Right lobe of liver (tissue), 6 donors: ENCODE measurements at regions of chr11 and their contacts with region 1.

Region 1: DNA sequence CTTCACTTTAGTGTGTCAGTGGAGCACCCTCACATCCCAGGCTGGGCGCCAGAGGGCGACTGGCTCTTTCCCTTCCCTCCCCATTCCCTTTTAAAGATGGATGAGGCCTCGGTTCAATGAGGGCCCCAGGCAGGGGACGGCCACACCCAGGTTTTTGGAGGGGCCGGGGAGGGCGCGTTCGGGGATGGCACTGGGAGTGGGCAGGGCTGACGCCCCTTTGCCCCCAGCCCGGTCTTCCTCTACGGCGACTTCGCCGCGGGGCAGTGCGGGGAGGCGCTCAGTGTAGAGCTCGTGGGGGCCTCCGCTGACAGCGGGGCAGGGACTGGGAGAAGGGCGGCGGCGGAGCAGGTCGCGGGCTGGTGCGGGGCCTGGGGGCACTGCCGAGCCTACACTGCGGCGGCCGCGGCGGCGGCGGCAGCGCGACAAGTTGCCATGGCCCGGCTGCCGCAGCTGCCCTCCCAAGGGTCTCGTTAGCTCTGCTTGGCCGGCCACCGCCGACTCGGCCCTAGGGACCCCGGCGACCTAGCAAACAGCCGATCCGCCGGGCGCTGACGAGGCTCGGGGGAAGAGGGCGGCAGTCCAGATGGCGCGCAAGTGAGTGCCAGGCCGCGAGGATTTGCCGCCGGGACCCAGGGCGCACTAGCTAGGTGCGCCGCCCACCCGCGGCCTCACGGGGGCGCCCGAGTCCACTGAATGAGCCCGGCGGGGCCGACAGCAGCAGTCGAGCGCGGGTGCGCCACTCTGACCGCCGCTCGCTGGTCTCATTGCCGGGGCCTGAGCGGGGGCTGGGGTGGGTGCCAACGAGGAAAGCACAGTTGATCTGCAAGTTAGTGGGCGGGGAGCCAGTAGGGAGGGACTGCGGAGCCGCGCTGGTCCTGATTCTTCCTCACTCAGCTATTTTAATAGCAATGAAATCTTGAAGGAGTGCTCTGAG is 92.7 kb downstream of the RRM1 start:
- DNase-seq: peak; percentile 93 to 95 (median 94)
- ATAC-seq: peak; percentile 82 to 92 (median 88)
- H3K4me3 ChIP-seq: peak overlapping the region; percentile 57 to 73 (median 60)
- H3K27ac ChIP-seq: peak overlapping the region; percentile 57 to 78 (median 75)
- H3K4me1 ChIP-seq: peaks cover 0 to 32% (median 9%) of the 10 kb centered on the region in 4 donors
- H3K27me3 ChIP-seq: no peaks in the 10 kb centered on the region
- CTCF ChIP-seq: peak; percentile 94 to 98 (median 97)
- POLR2A ChIP-seq: peak; percentile 46

Region 2: GRCh38 chr11:3894128-3894731 is 293.1 kb before region 1 on chr11:
- intact Hi-C with region 1: no loop called
- DNase-seq: no peak
- ATAC-seq: peak; percentile 13 to 66 (median 16)
- H3K4me3 ChIP-seq: no peak overlapping the region
- H3K27ac ChIP-seq: peak overlapping the region; percentile 54 to 84 (median 57)
- H3K4me1 ChIP-seq: peaks cover 0 to 42% (median 21%) of the 10 kb centered on the region in 4 donors
- H3K27me3 ChIP-seq: no peaks in the 10 kb centered on the region
- CTCF ChIP-seq: no peak
- POLR2A ChIP-seq: no peak

Region 3: GRCh38 chr11:4076774-4077173 is 110.5 kb before region 1 on chr11:
- intact Hi-C with region 1: no loop called
- DNase-seq: no peak
- ATAC-seq: no peak
- H3K4me3 ChIP-seq: no peak overlapping the region
- H3K27ac ChIP-seq: no peak overlapping the region
- H3K4me1 ChIP-seq: peaks cover 0 to 7% (median 0%) of the 10 kb centered on the region in 4 donors
- H3K27me3 ChIP-seq: no peaks in the 10 kb centered on the region
- CTCF ChIP-seq: no peak
- POLR2A ChIP-seq: no peak

Region 4: DNA sequence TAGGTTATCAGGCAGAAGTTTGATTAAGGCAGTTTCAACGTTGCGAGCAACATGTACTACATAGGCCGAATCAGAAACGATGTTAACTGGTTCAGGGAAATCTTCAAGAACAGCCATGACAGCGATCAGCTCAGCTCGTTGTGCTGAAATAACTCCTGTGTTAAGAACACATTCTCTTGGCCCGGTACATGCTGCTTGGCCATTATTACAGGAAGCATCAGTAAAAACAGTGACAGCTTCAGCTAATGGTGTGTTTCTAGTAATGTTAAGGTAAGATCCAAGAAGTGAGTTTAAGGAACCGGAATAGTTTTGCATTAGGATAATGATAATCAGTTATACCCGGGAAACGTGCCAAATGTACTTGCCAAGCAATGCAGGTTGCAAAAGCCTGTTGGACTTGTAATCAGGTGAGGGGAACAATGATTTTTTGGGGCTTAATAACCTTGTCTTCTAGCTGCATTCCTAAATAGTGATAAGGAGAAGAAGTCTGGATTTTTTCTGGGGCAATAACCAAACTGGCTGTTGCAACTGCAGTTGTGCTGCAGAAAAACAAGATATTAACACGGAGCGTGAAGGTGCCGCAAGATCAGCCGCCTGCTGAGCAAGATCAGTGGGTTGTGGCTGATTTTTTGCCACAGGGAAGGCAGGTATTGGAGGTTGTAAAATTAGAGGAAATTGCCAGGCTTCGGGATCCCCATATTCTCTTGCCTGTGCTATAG is 309.4 kb after region 1 on chr11:
- intact Hi-C with region 1: loop called (anchors 10 kb)
- DNase-seq: no peak
- ATAC-seq: peak in 1 of 4 donors; percentile 22
- H3K4me3 ChIP-seq: no peak overlapping the region
- H3K27ac ChIP-seq: no peak overlapping the region
- H3K4me1 ChIP-seq: no peaks in the 10 kb centered on the region
- H3K27me3 ChIP-seq: no peaks in the 10 kb centered on the region
- CTCF ChIP-seq: no peak
- POLR2A ChIP-seq: no peak

Region 5: DNA sequence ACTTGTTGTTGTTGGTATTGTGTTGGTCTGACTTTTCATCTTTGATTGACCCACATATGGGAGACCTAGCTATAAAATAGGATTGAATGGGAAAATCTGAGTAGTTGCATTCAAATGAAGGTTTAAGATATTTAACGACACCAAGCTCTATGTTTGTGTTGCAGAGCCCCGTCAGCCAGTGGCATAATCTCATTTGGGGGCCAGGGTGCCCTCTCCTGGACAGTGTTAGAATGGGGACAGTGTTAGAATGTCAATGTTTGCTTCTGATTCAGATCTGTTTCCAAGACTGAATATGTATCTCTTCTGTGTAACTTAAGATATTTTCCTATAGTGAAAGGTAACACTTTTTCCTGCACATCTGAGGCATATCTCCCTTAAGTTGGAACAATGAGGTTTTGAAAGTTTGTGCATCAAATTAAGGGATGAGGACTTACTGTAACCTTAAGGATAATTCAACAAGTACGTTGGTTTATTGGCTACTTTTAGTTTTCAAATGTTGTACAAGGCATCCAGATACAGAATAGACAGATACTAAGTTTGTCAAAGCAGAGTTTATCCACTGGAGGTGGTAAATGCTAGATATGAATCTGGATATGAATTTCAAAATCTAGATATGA is 352.4 kb after region 1 on chr11:
- intact Hi-C with region 1: loop called in 1 of 2 experiments (anchors 10 kb)
- DNase-seq: peak; percentile 57 to 60 (median 60)
- ATAC-seq: peak; percentile 91 to 94 (median 92)
- H3K4me3 ChIP-seq: no peak overlapping the region
- H3K27ac ChIP-seq: no peak overlapping the region
- H3K4me1 ChIP-seq: peaks cover 0 to 4% (median 0%) of the 10 kb centered on the region in 4 donors
- H3K27me3 ChIP-seq: no peaks in the 10 kb centered on the region
- CTCF ChIP-seq: peak; percentile 72 to 81 (median 77)
- POLR2A ChIP-seq: no peak

Region 6: GRCh38 chr11:4551346-4551979 is 364.1 kb after region 1 on chr11:
- intact Hi-C with region 1: loop called (anchors 10 kb)
- DNase-seq: no peak
- ATAC-seq: peak; percentile 36 to 57 (median 50)
- H3K4me3 ChIP-seq: no peak overlapping the region
- H3K27ac ChIP-seq: no peak overlapping the region
- H3K4me1 ChIP-seq: peaks cover 0 to 17% (median 8%) of the 10 kb centered on the region in 4 donors
- H3K27me3 ChIP-seq: no peaks in the 10 kb centered on the region
- CTCF ChIP-seq: peak; percentile 38 to 58 (median 50)
- POLR2A ChIP-seq: no peak

Region 7: GRCh38 chr11:5004424-5005274 is 817.3 kb after region 1 on chr11:
- intact Hi-C with region 1: loop called in 1 of 2 experiments (anchors 10 kb)
- DNase-seq: peak in 2 of 3 donors; percentile 49 to 55
- ATAC-seq: peak; percentile 67 to 80 (median 74)
- H3K4me3 ChIP-seq: no peak overlapping the region
- H3K27ac ChIP-seq: no peak overlapping the region
- H3K4me1 ChIP-seq: no peaks in the 10 kb centered on the region
- H3K27me3 ChIP-seq: no peaks in the 10 kb centered on the region
- CTCF ChIP-seq: peak; percentile 58 to 67 (median 60)
- POLR2A ChIP-seq: no peak